Activated T-helper 2 cell treated with anti-CD3 and anti-CD28 coated beads, Interferon-gamma antibody, Interleukin-2, Interleukin-4, amounts not matched to agents 10 μg/mL and 5 μg/mL and 100 μg/mL, durations not matched to agents 14 hours and 24 hours and 36 hours (primary cell): ENCODE measurements at regions of chr3 and their contacts with region 1.

Region 1: DNA sequence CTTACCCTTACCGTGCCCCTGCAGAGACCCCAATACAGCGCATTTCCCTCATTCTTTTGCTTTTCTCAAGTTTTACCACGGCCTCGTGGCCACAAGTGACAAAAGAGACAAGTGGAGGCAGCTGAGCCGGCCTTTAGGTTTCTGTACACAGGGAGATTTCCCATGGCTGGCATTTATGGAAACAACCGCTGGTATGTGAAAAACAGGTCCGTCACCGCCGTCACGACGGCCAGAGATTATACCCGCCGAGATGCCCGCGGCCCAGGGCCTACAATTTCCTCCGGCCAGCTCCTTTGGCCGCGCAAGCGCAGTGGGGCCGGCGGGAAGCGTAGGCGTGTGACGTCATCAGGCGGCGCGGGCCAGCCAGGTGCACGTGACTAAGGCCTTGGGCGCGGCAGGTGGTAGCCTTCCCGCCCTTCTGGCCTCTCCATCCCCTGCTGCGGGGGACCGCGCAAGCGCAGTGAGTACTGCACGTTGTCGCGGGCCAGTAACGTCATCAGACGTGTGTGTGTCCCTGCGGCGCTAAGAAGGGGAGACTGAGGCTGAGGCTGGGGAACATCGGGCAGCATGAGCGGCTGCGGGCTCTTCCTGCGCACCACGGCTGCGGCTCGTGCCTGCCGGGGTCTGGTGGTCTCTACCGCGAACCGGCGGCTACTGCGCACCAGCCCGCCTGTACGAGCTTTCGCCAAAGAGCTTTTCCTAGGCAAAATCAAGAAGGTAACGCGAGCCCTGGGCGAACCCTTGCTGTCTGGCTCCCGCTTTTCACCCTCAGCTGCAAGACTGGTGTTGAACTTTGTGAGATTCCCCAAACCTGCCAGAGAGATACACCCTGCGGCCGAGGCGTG is at the start of gene ACAD9:
- DNase-seq: peak; percentile 98
- H3K4me3 Mint-ChIP-seq: peak within 1 kb of the TSS; percentile 93
- H3K27ac Mint-ChIP-seq: peak within 1 kb of the TSS; percentile 95
- H3K4me1 Mint-ChIP-seq: peaks cover 51% of the 10 kb centered on the region
- H3K27me3 Mint-ChIP-seq: no peaks in the 10 kb centered on the region
- total RNA-seq, gene ACAD9: 60.8 and 68.9 TPM in 2 replicates

Region 2: DNA sequence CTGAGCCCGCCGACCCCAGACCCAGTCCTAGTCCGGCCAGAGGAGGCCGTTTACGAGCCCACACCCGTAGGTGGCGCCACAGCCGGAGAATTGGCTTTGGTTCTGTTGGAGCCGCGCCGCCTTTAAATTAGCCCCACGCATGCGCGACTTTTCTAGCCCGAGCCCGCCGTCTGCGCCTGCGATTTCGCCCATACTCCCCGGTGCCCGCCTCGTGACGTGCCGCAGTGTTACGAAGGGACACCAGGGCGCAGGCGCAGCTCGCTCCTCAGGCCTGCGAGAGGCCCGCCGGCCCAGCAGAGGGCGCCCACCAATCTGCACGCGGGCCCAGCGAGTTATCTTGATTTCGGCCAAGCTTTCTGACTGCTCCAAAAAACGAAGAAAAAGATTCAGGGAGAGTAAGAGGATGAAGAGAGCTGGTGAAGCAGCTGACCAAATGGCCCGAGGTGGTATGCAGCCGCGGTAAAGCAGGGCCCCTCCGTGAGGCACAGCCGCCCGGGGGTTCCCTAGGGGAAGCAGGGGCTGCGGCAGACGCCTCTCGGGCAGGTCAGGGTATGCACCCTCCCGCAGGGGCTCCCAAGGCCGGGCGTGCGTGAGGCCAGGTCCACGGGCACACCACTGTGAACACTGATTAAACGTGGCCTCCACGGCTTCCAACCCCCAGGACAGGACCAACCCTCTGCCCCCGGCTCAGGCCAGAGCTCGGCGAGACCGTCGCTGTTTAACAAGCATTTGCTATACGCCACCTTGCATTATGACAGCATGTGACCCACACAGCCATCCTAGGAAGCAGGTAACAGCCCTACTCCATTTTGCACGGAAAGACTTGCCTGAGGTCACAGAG is 261.6 kb before region 1 on chr3:
- intact Hi-C with region 1: loop called (anchors 1 kb)
- DNase-seq: peak; percentile 99
- H3K4me3 Mint-ChIP-seq: peak overlapping the region; percentile 86
- H3K27ac Mint-ChIP-seq: peak overlapping the region; percentile 84
- H3K4me1 Mint-ChIP-seq: peaks cover 31% of the 10 kb centered on the region
- H3K27me3 Mint-ChIP-seq: no peaks in the 10 kb centered on the region

Region 3: GRCh38 chr3:128725932-128726690 is 153.2 kb before region 1 on chr3 and contains the start of gene RAB7A:
- intact Hi-C with region 1: loop called (anchors 1 kb)
- DNase-seq: peak; percentile 94
- H3K4me3 Mint-ChIP-seq: peak within 1 kb of the TSS; percentile 90
- H3K27ac Mint-ChIP-seq: peak within 1 kb of the TSS; percentile 80
- H3K4me1 Mint-ChIP-seq: peaks cover 46% of the 10 kb centered on the region
- H3K27me3 Mint-ChIP-seq: peaks cover 3% of the 10 kb centered on the region
- total RNA-seq, gene RAB7A: 320 and 322 TPM in 2 replicates

Region 4: GRCh38 chr3:128794770-128795649 is 84.3 kb before region 1 on chr3:
- intact Hi-C with region 1: no loop called
- DNase-seq: peak; percentile 61
- H3K4me3 Mint-ChIP-seq: peak overlapping the region; percentile 49
- H3K27ac Mint-ChIP-seq: peak overlapping the region; percentile 93
- H3K4me1 Mint-ChIP-seq: peaks cover 63% of the 10 kb centered on the region
- H3K27me3 Mint-ChIP-seq: no peaks in the 10 kb centered on the region

Region 5: DNA sequence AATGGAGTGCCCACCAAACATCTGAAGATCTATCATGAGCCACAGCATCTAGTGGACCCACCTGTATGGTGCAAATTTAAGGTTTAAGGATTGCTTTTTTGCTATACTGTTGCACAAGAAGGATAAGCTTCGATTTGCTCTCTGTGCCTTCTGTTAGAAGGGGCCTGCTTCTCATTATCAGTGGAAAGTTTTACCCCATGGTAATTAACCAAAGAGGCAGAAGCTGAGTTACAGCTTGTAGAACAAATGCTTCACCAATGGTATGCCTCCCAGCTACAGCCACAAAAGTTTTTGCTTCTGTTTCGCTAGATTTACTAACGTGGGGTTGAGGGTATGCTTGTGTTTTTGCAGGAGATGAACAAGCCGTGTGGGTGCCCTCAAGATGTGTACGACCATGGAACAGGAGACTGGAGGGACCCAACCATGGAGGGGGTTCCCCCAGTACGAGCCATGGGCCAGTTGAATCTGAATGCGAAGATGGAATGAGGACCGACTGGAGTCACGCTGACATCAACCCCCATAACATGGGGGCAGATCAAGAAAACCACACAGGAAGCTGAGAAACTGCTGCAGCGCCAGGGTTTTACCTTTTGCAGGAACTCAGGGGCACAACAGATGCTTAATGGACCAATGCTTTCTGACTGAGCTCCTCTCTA is 43.6 kb after region 1 on chr3:
- intact Hi-C with region 1: loop called (anchors 2 kb)
- DNase-seq: peak; percentile 37
- H3K4me3 Mint-ChIP-seq: peak overlapping the region; percentile 58
- H3K27ac Mint-ChIP-seq: peak overlapping the region; percentile 78
- H3K4me1 Mint-ChIP-seq: peaks cover 23% of the 10 kb centered on the region
- H3K27me3 Mint-ChIP-seq: peaks cover 2% of the 10 kb centered on the region